ENCODE measurements at regions of chr14 and their contacts with region 1.

Region 1: GRCh38 chr14:23320774-23321571 is at the start of gene PABPN1:
- DNase-seq: peak; percentile 93 to 100 (median 96)
- ATAC-seq: peak; percentile 85
- H3K4me3 ChIP-seq: peak within 1 kb of the TSS; percentile 87
- H3K4me3 Mint-ChIP-seq: peak within 1 kb of the TSS; percentile 94
- H3K27ac ChIP-seq: peak within 1 kb of the TSS; percentile 92 to 96
- H3K27ac Mint-ChIP-seq: peak within 1 kb of the TSS; percentile 92
- H3K4me1 ChIP-seq: peaks cover 29% of the 10 kb centered on the region
- H3K4me1 Mint-ChIP-seq: peaks cover 35% of the 10 kb centered on the region
- H3K27me3 ChIP-seq: no peaks in the 10 kb centered on the region
- H3K27me3 Mint-ChIP-seq: no peaks in the 10 kb centered on the region
- CTCF ChIP-seq: no peak
- total RNA-seq, gene PABPN1: 188 to 195 TPM

Region 2: GRCh38 chr14:22766456-22767322 is 554.3 kb before region 1 on chr14 and contains the start of gene OXA1L:
- CTCF ChIA-PET with region 1: no interaction called
- POLR2A ChIA-PET with region 1: interaction called, 13 read pairs
- intact Hi-C with region 1: no loop called
- DNase-seq: peak; percentile 86 to 99 (median 96)
- ATAC-seq: peak; percentile 94
- H3K4me3 ChIP-seq: peak within 1 kb of the TSS; percentile 87
- H3K4me3 Mint-ChIP-seq: peak within 1 kb of the TSS; percentile 85
- H3K27ac ChIP-seq: peak within 1 kb of the TSS; percentile 80
- H3K27ac Mint-ChIP-seq: peak within 1 kb of the TSS; percentile 88
- H3K4me1 ChIP-seq: peaks cover 23% of the 10 kb centered on the region
- H3K4me1 Mint-ChIP-seq: peaks cover 33% of the 10 kb centered on the region
- H3K27me3 ChIP-seq: no peaks in the 10 kb centered on the region
- H3K27me3 Mint-ChIP-seq: no peaks in the 10 kb centered on the region
- CTCF ChIP-seq: no peak
- total RNA-seq, gene OXA1L: 176 to 177 TPM

Region 3: DNA sequence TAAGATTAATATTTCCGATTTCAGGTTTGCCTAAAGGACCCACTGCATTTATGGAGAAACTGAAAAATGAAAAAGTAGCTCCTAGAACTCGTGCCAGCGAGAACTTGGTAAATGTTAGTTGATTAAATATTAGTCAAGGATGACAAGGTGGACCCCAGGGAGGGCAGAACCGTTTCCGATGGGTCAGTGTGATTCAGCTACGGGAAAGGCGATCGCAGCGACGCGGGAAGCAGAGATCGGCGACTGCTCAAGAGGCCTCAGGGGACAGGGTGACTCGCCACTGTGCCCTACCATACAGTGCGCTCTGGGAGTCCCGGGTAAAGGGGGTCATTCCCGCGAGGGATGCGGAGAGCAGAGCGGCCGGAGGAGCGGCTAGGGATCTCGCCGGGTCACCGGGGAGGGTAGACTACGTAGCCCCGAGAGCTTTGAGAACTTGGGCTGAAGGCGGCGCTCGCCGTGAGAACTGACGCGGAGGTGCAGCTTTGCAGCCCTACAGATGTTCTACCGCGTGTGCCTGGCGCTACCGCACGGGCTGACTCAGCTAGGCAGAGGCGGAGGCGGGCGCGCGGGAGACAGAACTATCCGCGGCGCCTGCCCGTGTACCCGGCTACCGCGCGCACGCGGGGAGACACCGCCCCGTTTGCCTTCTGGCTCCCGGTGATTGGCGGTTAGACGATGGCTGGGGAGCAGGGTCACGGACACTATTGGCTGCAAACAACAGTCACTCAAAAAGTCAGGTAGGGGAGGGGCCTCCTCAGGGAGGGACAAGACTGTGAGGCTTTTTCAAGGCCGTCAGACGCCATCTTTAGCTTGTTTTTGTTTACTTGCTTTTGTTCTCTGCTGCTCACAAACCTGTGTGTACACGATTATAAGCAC is 314.2 kb before region 1 on chr14:
- CTCF ChIA-PET with region 1: interaction called, 4 read pairs
- POLR2A ChIA-PET with region 1: interaction called, 12 read pairs
- intact Hi-C with region 1: no loop called
- DNase-seq: peak; percentile 92 to 99 (median 96)
- ATAC-seq: peak; percentile 94
- H3K4me3 ChIP-seq: peak overlapping the region; percentile 80
- H3K4me3 Mint-ChIP-seq: peak overlapping the region; percentile 95
- H3K27ac ChIP-seq: peak overlapping the region; percentile 83 to 84
- H3K27ac Mint-ChIP-seq: peak overlapping the region; percentile 93
- H3K4me1 ChIP-seq: peaks cover 26% of the 10 kb centered on the region
- H3K4me1 Mint-ChIP-seq: peaks cover 52% of the 10 kb centered on the region
- H3K27me3 ChIP-seq: no peaks in the 10 kb centered on the region
- H3K27me3 Mint-ChIP-seq: no peaks in the 10 kb centered on the region
- CTCF ChIP-seq: peak; percentile 60

Region 4: DNA sequence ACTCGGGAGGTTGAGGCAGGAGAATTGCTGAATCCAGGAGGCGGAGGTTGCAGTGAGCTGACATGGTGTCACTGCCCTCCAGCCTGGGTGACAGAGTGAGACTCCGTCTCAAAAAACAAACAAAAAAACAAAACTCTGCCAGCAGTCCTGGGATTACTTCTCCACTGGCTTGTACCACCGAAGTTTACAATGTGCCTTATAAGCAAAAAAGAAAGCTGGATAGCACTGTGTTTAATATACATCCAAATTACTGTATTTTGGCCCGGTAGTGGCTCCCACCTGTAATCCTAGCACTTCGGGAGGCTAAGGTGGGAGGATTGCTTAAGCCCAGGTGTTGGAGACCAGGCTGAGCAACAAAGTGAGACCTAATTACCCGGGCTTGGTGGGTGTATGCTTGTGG is 51.8 kb before region 1 on chr14:
- CTCF ChIA-PET with region 1: no interaction called
- POLR2A ChIA-PET with region 1: interaction called, 5 read pairs
- intact Hi-C with region 1: loop called in 1 of 2 experiments (anchors 10 kb)
- DNase-seq: no peak
- ATAC-seq: no peak
- H3K4me3 ChIP-seq: no peak overlapping the region
- H3K4me3 Mint-ChIP-seq: no peak overlapping the region
- H3K27ac ChIP-seq: no peak overlapping the region
- H3K27ac Mint-ChIP-seq: no peak overlapping the region
- H3K4me1 ChIP-seq: no peaks in the 10 kb centered on the region
- H3K4me1 Mint-ChIP-seq: no peaks in the 10 kb centered on the region
- H3K27me3 ChIP-seq: peaks cover 0 to 4% of the 10 kb centered on the region in 2 experiments
- H3K27me3 Mint-ChIP-seq: peaks cover 17% of the 10 kb centered on the region
- CTCF ChIP-seq: no peak

Region 5: DNA sequence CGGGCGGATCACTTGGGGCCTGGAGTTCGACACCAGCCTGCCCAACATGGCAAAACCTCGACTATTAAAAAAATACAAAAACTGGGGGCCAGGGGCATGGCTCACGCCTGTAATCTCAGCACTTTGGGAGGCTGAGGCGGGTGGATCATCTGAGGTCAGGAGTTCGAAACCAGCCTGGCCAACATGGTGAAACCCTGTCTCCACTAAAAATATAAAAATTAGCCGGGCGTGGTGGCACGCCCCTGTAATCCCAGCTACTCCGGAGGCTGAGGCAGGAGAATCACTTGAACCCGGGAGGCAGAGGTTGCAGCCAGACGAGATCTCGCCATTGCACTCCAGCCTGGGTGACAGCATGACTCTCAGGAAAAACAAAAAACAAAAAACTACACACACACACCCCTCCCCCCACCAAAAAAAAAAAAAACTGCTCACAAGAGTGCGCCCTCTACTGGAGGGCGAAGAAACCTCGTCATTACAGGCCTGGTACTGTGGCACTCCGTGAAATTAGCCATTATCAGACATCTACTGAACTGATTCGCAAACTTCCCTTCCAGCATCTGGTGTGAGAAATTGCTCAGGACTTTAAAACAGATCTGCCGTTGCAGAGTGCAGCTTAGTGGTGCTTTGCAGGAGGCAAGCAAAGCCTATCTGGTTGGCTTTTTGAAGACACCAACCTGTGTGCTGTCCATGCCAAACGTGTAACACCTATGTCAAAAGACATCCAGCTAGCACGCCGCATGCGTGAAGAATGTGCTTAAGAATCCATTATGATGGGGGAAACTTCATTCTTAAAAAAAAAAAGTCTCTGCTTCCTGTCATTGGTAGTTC is 26.0 kb before region 1 on chr14:
- CTCF ChIA-PET with region 1: interaction called, 66 read pairs
- POLR2A ChIA-PET with region 1: interaction called, 455 read pairs
- intact Hi-C with region 1: no loop called
- DNase-seq: peak; percentile 28 to 87 (median 48)
- ATAC-seq: peak; percentile 88
- H3K4me3 ChIP-seq: no peak overlapping the region
- H3K4me3 Mint-ChIP-seq: peak overlapping the region; percentile 27
- H3K27ac ChIP-seq: no peak overlapping the region
- H3K27ac Mint-ChIP-seq: peak overlapping the region; percentile 37
- H3K4me1 ChIP-seq: peaks cover 13% of the 10 kb centered on the region
- H3K4me1 Mint-ChIP-seq: peaks cover 28% of the 10 kb centered on the region
- H3K27me3 ChIP-seq: no peaks in the 10 kb centered on the region
- H3K27me3 Mint-ChIP-seq: no peaks in the 10 kb centered on the region
- CTCF ChIP-seq: peak; percentile 86

Region 6: DNA sequence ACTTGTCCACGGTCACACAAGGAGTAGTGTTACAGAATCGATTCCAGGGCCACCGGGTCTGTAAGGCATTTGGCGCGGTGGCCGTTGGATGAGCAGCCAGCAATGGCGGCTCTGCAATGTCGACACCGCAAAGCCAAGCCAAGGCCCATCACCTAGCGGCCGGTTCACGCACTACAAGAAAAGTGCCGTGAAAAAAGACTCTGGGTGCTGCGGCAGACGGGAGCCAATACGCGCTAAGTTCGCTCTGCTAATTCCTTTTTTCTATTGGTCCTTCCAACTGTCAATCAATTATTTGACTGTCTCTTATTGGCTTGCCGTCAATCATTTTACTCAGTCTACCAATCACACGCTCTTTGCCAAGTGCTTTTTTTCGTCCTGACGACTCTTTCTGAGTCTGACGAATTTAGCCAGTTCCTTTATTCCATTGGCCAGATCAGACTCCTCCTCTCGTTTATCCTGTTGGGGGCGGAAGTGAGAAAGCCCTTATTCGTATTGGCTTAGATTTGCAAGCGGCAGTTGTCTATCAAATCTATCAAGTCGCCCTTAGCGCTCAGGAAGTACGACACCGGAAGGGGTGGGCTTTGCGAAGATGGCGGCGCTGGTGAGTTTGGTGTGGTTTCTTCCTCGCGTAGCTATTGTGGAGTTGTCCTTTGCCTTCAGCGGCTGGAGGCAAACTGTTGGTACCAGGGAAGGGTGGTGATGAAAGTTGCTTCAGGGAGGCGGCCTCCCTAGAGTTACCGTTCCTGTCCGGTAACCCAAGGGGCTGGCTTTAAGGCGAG is 148.3 kb after region 1 on chr14 and contains the start of gene NGDN:
- CTCF ChIA-PET with region 1: no interaction called
- POLR2A ChIA-PET with region 1: interaction called, 8 read pairs
- intact Hi-C with region 1: loop called (anchors 1 to 2 kb)
- DNase-seq: peak; percentile 81 to 99 (median 88)
- ATAC-seq: peak; percentile 90
- H3K4me3 ChIP-seq: peak within 1 kb of the TSS; percentile 87
- H3K4me3 Mint-ChIP-seq: no peak within 1 kb of the TSS
- H3K27ac ChIP-seq: peak within 1 kb of the TSS; percentile 67 to 92
- H3K27ac Mint-ChIP-seq: no peak within 1 kb of the TSS
- H3K4me1 ChIP-seq: peaks cover 14% of the 10 kb centered on the region
- H3K4me1 Mint-ChIP-seq: peaks cover 7% of the 10 kb centered on the region
- H3K27me3 ChIP-seq: no peaks in the 10 kb centered on the region
- H3K27me3 Mint-ChIP-seq: no peaks in the 10 kb centered on the region
- CTCF ChIP-seq: peak; percentile 74
- total RNA-seq, gene NGDN: 146 to 149 TPM

Region 7: DNA sequence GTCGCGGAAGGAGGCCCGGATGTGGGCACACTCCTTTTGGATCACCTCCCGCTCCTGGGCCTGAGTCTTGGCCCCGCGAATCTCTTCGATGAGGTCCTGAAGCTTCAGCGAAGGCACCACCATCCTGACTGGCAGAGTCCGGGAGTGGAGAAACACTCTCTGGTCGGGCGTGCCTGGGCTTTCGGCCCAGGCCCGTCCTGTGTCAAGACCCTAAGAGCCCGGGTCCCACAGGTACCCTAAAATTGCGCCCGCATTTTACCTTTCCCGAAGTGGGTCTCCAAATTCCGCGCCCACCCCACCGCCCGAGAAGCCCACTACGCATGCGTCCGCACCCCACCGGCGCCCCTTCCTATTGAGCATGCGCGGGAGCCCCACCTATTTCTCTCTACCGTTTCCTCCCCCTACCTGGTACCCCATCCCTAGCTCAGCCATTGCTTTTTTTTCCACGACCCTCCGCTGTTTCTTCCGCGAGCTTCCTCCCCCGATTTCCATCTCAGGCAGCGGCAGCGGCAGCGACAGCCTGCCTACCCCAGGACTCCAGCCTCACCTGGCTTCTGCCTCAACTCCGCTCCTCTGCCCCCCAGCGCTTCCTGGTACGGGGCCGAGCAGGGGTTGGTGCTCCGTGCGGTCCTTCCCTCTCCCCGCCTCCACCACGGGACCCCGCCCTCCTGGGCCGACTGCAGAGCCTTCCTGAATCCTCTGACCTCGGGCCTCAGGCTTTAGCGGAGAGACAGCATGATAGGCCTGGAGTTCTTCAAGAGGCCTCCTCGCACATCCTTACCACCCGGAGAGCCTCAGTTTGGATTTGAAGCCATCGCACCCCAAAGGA is 246.4 kb after region 1 on chr14 and contains the start of gene AP1G2:
- CTCF ChIA-PET with region 1: no interaction called
- POLR2A ChIA-PET with region 1: interaction called, 6 read pairs
- intact Hi-C with region 1: loop called in 1 of 2 experiments (anchors 5 kb)
- DNase-seq: peak; percentile 69 to 94 (median 83)
- ATAC-seq: peak; percentile 91
- H3K4me3 ChIP-seq: peak within 1 kb of the TSS; percentile 75
- H3K4me3 Mint-ChIP-seq: peak within 1 kb of the TSS; percentile 99
- H3K27ac ChIP-seq: peak within 1 kb of the TSS; percentile 75 to 79
- H3K27ac Mint-ChIP-seq: peak within 1 kb of the TSS; percentile 96
- H3K4me1 ChIP-seq: peaks cover 40% of the 10 kb centered on the region
- H3K4me1 Mint-ChIP-seq: peaks cover 52% of the 10 kb centered on the region
- H3K27me3 ChIP-seq: no peaks in the 10 kb centered on the region
- H3K27me3 Mint-ChIP-seq: peaks cover 7% of the 10 kb centered on the region
- CTCF ChIP-seq: no peak
- total RNA-seq, gene AP1G2: 193 to 198 TPM

Region 8: GRCh38 chr14:23727566-23728335 is 406.8 kb after region 1 on chr14:
- CTCF ChIA-PET with region 1: no interaction called
- POLR2A ChIA-PET with region 1: no interaction called
- intact Hi-C with region 1: no loop called
- DNase-seq: peak in 3 of 14 experiments; percentile 1 to 16 (median 8)
- ATAC-seq: no peak
- H3K4me3 ChIP-seq: no peak overlapping the region
- H3K4me3 Mint-ChIP-seq: no peak overlapping the region
- H3K27ac ChIP-seq: no peak overlapping the region
- H3K27ac Mint-ChIP-seq: no peak overlapping the region
- H3K4me1 ChIP-seq: no peaks in the 10 kb centered on the region
- H3K4me1 Mint-ChIP-seq: no peaks in the 10 kb centered on the region
- H3K27me3 ChIP-seq: peaks cover 6% of the 10 kb centered on the region in 2 experiments
- H3K27me3 Mint-ChIP-seq: peaks cover 14% of the 10 kb centered on the region
- CTCF ChIP-seq: no peak